Naive thymus-derived CD4-positive, alpha-beta T cell (primary cell): ENCODE measurements at regions of chr17 and their contacts with region 1.

Region 1: DNA sequence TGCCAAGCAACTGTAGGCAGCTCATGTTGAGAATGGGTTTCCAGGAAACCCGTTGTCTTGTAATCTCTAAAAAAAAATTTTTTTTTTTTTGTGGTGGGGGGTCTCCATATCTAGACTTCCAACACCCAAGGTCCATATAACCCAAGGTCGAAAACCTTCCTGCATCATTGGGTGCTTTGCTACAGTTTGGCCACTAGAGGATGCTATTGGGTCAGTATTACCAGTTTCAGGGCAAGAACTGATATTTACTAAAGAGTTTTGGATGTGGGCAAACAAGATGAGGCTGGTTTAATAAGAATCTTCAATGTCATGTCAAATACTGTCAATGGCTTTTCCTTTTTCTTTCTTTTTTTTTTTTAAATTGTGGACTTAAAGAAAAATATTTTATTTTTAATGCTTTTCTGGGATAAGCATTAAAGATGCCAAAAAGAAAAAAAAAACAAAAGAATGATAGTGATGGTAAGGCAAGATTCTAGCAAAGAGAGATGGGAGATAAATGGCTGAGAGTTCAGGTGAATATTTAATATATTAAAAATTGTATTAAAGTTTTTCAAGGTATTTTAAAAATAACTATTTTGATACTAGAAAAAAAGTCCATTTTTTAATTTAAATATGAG is 62.2 kb downstream of the DHRS7C start:
- DNase-seq: peak in 3 of 9 donors; percentile 10 to 20 (median 15)
- ATAC-seq: peak; percentile 60
- H3K4me3 ChIP-seq: no peak overlapping the region
- H3K4me3 Mint-ChIP-seq: no peak overlapping the region
- H3K27ac ChIP-seq: no peak overlapping the region
- H3K27ac Mint-ChIP-seq: no peak overlapping the region
- H3K4me1 ChIP-seq: no peaks in the 10 kb centered on the region
- H3K4me1 Mint-ChIP-seq: peaks cover 0 to 2% (median 0%) of the 10 kb centered on the region in 7 donors
- H3K27me3 ChIP-seq: no peaks in the 10 kb centered on the region
- H3K27me3 Mint-ChIP-seq: peaks cover 0 to 17% (median 6%) of the 10 kb centered on the region in 5 donors

Region 2: DNA sequence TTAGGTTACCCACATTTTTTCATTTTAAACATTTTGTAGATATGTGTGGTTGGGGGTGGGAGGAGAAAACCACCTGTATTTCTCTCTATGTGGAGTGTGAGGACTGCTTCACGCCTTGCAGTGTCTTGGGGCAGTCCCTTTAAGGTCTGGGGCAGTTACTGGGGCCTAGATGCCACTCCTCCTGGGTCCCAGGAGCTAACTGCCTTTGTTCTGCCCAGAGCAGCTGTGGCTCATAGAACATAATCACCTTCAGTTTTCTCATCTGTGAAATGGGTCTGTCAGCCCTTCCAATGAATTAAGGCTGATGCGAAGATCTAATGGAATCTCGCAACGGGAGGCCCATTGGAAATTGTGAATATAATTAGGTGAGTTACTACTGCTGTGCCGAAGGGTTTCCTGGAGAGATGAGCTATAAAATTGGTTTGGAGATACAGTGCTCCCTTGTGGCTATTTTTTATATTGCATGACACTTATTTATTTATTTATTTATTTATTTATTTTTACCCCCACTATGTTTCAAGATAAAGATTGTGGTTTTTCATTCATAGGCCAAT is 39.3 kb after region 1 on chr17:
- CTCF ChIA-PET with region 1: no interaction called
- POLR2A ChIA-PET with region 1: no interaction called
- intact Hi-C with region 1: loop called in 1 of 2 experiments (anchors 1 kb)
- DNase-seq: peak in 4 of 9 donors; percentile 4 to 13 (median 8)
- ATAC-seq: no peak
- H3K4me3 ChIP-seq: no peak overlapping the region
- H3K4me3 Mint-ChIP-seq: no peak overlapping the region
- H3K27ac ChIP-seq: no peak overlapping the region
- H3K27ac Mint-ChIP-seq: no peak overlapping the region
- H3K4me1 ChIP-seq: no peaks in the 10 kb centered on the region
- H3K4me1 Mint-ChIP-seq: peaks cover 0 to 3% (median 0%) of the 10 kb centered on the region in 7 donors
- H3K27me3 ChIP-seq: no peaks in the 10 kb centered on the region
- H3K27me3 Mint-ChIP-seq: peaks cover 0 to 26% (median 16%) of the 10 kb centered on the region in 5 donors